Mammary epithelial cell (primary cell): ENCODE measurements at regions of chr1 and their contacts with region 1.

Region 1: DNA sequence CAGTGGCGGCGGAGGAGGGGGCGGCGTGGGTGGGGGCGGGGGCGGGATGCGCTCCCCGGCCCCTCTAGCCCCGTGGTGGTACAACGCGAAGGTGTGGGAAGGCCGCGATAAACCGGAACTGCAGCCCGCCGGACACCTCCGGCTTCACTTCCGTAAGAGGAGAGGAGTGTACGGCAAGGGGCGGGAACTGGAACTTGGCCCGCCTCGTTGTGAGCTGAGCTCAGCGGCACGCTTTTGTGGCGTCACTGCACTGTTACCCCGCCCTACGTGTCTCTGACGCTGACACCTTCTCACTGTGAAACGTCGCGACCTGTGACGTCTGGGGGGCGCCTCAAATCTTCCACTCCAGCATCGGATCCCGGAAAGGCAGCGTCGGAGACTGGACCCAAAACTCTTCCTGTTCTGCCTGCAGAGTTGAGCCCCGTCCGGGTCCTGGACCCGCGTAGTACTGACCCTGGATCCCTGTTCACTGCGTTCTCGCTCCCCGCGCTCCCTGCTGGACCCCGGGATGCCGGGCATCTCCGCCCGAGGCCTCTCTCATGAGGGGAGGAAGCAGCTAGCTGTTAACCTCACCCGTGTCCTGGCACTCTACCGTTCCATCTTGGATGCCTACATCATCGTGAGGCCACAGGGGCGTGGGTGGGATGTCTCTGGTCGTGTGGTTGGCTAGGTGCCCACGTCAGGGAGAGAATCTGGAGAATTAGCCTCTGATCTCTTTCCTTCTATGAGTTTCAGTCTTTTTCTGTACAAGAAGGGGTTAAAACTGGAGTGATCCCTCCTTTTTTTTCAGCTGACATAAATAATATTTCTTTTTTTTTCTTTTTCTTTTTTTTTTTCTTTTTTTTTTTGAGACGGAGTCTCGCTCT is at the start of gene ISG20L2:
- DNase-seq: peak; percentile 96
- H3K4me3 ChIP-seq: peak within 1 kb of the TSS; percentile 77 to 96 (median 90)
- H3K27ac ChIP-seq: peak within 1 kb of the TSS; percentile 87
- H3K4me1 ChIP-seq: peaks cover 41% of the 10 kb centered on the region
- H3K27me3 ChIP-seq: no peaks in the 10 kb centered on the region
- CTCF ChIP-seq: no peak
- total RNA-seq, gene ISG20L2: 27.0 to 42.7 TPM

Region 2: GRCh38 chr1:155809088-155809487 is 919.7 kb before region 1 on chr1:
- CTCF ChIA-PET with region 1: no interaction called
- dilution Hi-C with region 1: no loop called
- in situ Hi-C with region 1: no loop called
- intact Hi-C with region 1: no loop called
- DNase-seq: no peak
- H3K4me3 ChIP-seq: no peak overlapping the region
- H3K27ac ChIP-seq: no peak overlapping the region
- H3K4me1 ChIP-seq: no peaks in the 10 kb centered on the region
- H3K27me3 ChIP-seq: no peaks in the 10 kb centered on the region
- CTCF ChIP-seq: no peak

Region 3: DNA sequence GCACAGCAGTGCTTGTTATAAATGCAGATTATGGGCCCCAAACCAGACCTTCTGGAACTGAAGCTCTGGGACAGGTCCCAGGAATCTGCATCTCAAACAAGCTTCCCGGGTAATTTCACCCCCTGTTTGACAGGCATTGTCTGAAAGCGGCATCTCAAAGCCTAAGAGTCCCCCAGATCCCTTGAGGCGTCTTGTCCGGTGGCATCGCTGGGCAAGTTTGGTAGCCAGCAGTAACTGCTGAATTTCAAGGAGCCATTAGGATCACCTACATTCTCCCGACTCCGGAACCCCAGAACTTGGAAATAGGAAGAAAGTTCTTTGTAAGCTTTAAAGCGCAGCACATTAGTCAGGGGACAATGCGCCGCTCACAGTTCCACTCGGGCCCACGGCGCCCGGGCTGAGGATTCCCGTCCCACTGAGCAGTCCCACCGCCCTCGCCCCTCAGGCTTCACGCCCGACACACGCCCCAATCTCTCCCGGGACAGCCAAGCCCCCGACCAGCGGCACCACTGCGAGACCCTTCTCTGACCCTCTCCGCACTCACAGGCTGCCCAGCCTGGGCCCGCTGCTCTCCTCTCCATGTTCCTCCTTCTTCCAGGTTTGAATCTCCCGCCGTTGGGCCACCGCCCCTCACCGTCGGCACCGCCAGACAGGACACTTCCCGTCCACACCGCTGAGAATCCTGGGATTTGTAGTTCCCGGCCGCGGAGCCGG is 156.7 kb before region 1 on chr1 and contains the start of gene IQGAP3:
- CTCF ChIA-PET with region 1: no interaction called
- dilution Hi-C with region 1: no loop called
- in situ Hi-C with region 1: no loop called
- intact Hi-C with region 1: no loop called
- DNase-seq: peak; percentile 81
- H3K4me3 ChIP-seq: peak within 1 kb of the TSS; percentile 66 to 88 (median 76)
- H3K27ac ChIP-seq: peak within 1 kb of the TSS; percentile 76
- H3K4me1 ChIP-seq: peaks cover 16% of the 10 kb centered on the region
- H3K27me3 ChIP-seq: no peaks in the 10 kb centered on the region
- CTCF ChIP-seq: no peak
- total RNA-seq, gene IQGAP3: 1.3 to 35.7 TPM

Region 4: DNA sequence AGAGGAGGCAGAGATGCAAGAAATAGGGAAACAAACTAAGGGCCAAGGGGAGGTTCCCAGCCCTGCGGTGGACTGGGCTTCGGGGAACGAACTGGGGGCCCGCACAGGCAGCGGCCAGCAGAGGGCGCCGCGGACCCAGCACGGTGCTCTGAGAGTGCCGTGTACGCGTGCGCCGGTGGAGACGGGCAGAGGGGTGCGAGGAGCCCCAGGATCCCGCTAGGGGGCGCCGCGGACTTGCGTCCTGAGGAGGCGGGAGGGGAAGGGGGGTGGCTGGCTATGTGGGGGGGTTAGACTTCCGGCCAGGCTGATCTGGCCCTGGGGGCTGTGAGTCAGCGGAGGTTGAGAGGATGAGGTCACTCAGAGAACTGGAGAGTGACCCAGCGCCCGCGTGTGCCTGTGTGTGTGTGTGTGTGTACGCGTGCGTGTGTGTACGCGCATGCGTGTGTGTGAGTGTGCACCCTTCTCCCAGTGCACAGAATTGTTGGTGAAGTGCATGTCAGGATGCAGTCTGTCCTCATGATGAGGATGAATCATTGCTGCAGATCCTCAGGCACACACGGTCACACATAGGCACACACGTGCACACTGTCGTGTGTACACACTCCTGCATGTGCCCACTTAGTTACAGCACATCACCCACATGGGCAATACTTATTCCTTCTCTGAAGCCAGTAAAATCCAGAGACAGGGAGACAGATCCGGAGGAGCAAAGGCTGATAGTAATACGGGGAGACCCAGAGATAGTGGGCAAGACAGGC is 68.7 kb before region 1 on chr1:
- CTCF ChIA-PET with region 1: interaction called, 10 read pairs
- dilution Hi-C with region 1: no loop called
- in situ Hi-C with region 1: no loop called
- intact Hi-C with region 1: loop called (anchors 1 kb)
- DNase-seq: peak; percentile 95
- H3K4me3 ChIP-seq: peak overlapping the region; percentile 27 to 54 (median 46)
- H3K27ac ChIP-seq: peak overlapping the region; percentile 51
- H3K4me1 ChIP-seq: peaks cover 41% of the 10 kb centered on the region
- H3K27me3 ChIP-seq: no peaks in the 10 kb centered on the region
- CTCF ChIP-seq: peak; percentile 91 to 98

Region 5: DNA sequence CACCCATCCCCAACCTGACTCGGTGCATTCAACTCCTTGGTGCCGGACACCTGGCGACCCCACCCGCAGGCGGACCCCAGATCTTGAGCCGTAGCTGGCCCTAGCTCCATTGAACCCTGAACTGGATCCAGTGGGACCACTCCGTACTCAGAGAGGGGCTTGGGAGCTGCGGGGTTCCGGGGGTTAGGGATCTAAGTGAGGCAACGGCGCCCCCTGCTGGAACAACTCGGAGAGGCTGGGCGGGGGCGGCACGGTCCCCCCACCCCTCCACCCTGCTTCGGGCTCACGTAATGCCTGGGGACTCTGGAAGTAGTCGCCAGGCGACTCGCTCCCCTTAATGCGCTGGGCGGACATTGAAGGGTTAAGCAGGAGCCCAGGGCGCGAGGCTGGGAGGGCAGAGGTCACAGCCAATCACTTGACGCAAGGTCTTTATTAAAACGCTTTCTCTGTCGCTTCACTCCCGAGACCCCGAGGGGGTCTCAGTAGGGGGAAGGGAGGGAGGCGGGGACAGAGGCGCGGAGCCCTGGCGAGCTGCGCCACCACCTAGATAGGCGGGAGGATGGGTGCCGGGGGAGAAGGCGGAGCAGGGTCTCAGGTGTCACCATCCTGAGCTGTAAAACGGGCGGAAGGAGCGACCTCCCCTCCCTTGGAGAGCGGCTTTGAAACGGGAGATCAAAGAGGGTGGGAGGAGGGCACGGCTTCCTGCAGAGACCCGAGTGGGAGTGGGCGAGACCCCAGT is 22.7 kb before region 1 on chr1:
- CTCF ChIA-PET with region 1: no interaction called
- dilution Hi-C with region 1: no loop called
- in situ Hi-C with region 1: no loop called
- intact Hi-C with region 1: loop called (anchors 1 kb)
- DNase-seq: no peak
- H3K4me3 ChIP-seq: peak overlapping the region; percentile 16 to 35 (median 22)
- H3K27ac ChIP-seq: no peak overlapping the region
- H3K4me1 ChIP-seq: peaks cover 54% of the 10 kb centered on the region
- H3K27me3 ChIP-seq: no peaks in the 10 kb centered on the region
- CTCF ChIP-seq: peak; percentile 59 to 89

Region 6: DNA sequence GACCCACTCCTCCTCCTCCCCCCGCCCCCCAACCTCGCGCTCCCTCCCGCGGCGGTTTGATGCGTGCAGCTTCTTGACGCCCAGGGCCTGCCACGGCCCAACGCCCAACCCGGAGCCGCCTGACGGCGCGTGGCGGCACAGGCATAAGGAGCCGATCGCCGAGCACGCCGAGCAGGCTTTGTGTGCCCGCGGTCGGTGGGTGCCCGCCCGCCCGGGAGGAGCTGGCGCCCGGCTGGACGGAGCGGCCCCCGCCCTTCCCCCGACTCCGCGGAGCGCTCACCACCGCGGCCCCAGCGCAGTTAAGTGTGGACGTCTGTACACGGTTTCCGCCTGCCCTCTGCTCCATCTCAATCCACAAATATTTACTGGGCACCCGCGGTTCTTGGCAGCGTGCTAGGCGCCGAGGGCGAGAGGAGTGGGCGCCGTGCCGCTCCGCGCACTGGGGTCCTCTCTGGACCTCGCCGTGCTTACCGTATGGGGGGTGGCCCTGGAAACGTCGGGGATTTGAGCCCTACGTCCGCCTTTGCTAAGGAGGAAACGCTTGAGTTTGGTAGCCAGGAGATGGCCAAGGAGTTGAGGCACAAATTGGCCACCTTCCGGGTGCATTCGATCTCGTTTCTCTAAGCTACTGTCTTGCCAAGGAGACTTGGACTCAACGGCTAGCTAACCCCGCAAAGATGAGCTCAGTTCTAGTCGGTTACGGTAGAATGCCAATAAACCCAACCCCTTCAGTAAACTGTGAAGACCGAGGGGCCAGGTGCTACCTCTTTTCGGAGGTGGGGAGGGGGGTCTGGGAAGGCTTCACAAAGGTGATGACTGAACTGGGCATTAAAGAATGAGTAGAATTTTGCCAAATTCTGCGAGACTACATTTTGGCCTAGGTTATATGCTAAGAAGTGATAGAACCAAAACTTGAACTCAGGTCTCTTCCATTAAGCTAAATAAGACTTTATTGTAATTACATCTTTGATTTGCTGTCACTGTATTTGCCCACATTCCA is 23.2 kb after region 1 on chr1:
- CTCF ChIA-PET with region 1: no interaction called
- dilution Hi-C with region 1: no loop called
- in situ Hi-C with region 1: no loop called
- intact Hi-C with region 1: loop called (anchors 1 kb)
- DNase-seq: peak; percentile 94
- H3K4me3 ChIP-seq: peak overlapping the region; percentile 68 to 76 (median 72)
- H3K27ac ChIP-seq: peak overlapping the region; percentile 74
- H3K4me1 ChIP-seq: peaks cover 33% of the 10 kb centered on the region
- H3K27me3 ChIP-seq: no peaks in the 10 kb centered on the region
- CTCF ChIP-seq: peak in 1 of 2 donors; percentile 1

Region 7: GRCh38 chr1:156797212-156797871 is 68.5 kb after region 1 on chr1:
- CTCF ChIA-PET with region 1: no interaction called
- dilution Hi-C with region 1: no loop called
- in situ Hi-C with region 1: no loop called
- intact Hi-C with region 1: loop called (anchors 1 kb)
- DNase-seq: peak; percentile 47
- H3K4me3 ChIP-seq: no peak overlapping the region
- H3K27ac ChIP-seq: no peak overlapping the region
- H3K4me1 ChIP-seq: no peaks in the 10 kb centered on the region
- H3K27me3 ChIP-seq: no peaks in the 10 kb centered on the region
- CTCF ChIP-seq: peak; percentile 83 to 94

Region 8: DNA sequence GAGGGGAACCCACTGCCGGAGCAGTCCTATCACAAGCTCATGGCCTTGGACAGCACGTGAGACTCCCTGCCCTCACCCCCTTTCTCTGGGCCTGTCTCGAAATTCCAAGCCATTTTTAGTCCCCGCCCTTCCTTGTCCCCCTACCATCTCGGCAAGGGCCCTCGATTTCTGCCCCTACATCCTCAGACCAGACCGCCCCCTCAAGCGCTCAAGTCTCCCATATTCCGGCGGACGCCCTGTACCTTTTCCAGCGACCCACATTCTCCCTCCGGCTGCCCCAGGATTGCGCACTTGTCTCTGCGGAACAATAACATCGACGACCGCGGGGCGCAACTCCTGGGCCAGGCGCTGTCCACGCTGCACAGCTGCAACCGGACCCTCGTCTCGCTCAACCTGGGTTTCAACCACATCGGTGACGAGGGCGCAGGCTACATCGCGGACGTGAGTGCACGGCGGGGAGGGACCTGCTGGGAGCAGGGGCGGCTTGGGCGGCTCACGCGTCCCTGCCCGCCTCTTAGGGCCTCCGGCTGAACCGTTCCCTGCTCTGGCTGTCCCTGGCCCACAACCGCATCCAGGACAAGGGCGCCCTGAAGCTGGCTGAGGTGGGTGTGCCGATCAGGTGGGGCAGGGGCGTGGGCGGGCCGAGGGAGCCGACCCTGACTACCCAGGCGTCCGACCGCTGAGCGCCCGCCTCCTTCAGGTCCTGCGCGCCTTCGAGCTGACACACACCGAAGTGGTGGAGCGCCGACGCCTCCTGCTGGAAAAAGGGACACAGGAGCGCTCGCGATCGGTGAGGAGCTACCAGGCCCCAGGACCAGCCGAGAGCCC is 198.6 kb after region 1 on chr1:
- CTCF ChIA-PET with region 1: no interaction called
- dilution Hi-C with region 1: no loop called
- in situ Hi-C with region 1: no loop called
- intact Hi-C with region 1: loop called (anchors 2 kb)
- DNase-seq: peak; percentile 72
- H3K4me3 ChIP-seq: peak overlapping the region in 2 of 3 experiments; percentile 36 to 49
- H3K27ac ChIP-seq: no peak overlapping the region
- H3K4me1 ChIP-seq: peaks cover 17% of the 10 kb centered on the region
- H3K27me3 ChIP-seq: peaks cover 33% of the 10 kb centered on the region
- CTCF ChIP-seq: peak; percentile 69 to 89